HepG2 (cell line): ENCODE measurements at regions of chr13 and their contacts with region 1.

Region 1: DNA sequence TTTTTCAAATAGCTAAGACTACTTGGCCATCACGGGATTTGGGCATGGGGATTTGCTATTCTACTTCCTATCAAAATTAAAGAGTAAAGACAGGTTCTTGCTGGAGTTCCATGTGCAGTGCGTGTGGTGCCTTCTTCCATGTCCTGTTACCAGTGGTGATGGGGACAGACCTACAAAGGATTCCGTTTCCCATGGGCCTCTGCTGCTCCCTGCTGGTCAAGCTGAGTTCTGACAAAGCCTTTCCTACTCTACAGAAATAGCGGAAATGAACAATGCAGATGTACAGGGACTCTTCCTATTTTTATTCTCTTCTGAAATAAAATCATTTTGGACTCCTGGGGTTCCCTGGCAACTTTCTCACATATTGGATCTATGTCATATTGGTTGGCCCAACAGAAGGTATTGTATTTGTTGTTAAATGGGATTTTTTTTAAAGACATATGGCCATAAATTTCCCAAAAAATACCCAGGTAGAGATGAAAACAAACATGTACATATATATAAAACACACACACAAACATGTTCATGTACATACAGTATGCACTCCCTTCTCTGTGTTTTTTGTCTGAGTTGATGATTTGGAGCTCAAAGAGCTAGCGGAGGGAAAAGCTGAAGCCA is 90.5 kb upstream of the SLC15A1 start:
- DNase-seq: peak; percentile 69
- ATAC-seq: peak; percentile 91
- H3K4me3 ChIP-seq: no peak overlapping the region
- H3K27ac ChIP-seq: no peak overlapping the region
- H3K4me1 ChIP-seq: peaks cover 10% of the 10 kb centered on the region
- H3K27me3 ChIP-seq: no peaks in the 10 kb centered on the region; a peak in 1 of 5 replicates
- CTCF ChIP-seq: peak; percentile 90
- EP300 ChIP-seq: no peak
- POLR2A ChIP-seq: no peak
- RAD21 ChIP-seq: peak; percentile 66; the same call in 1 of the 2 replicates

Region 2: GRCh38 chr13:96946709-96947311 is 1896.2 kb before region 1 on chr13:
- CTCF ChIA-PET with region 1: no interaction called
- POLR2A ChIA-PET with region 1: no interaction called
- in situ Hi-C with region 1: no loop called
- intact Hi-C with region 1: no loop called
- DNase-seq: peak; percentile 53
- ATAC-seq: peak; percentile 92
- H3K4me3 ChIP-seq: no peak overlapping the region
- H3K27ac ChIP-seq: no peak overlapping the region
- H3K4me1 ChIP-seq: peaks cover 10% of the 10 kb centered on the region
- H3K27me3 ChIP-seq: no peaks in the 10 kb centered on the region
- CTCF ChIP-seq: no peak
- EP300 ChIP-seq: no peak
- POLR2A ChIP-seq: no peak
- RAD21 ChIP-seq: no peak

Region 3: GRCh38 chr13:97849305-97849704 is 993.7 kb before region 1 on chr13:
- CTCF ChIA-PET with region 1: interaction called, 3 read pairs
- POLR2A ChIA-PET with region 1: no interaction called
- in situ Hi-C with region 1: no loop called
- intact Hi-C with region 1: loop called (anchors 2 kb)
- DNase-seq: peak; percentile 36
- ATAC-seq: peak; percentile 97
- H3K4me3 ChIP-seq: no peak overlapping the region
- H3K27ac ChIP-seq: no peak overlapping the region
- H3K4me1 ChIP-seq: peaks cover 13% of the 10 kb centered on the region
- H3K27me3 ChIP-seq: peaks cover 0 to under 1% of the 10 kb centered on the region in 2 experiments; a peak in 2 of 5 replicates
- CTCF ChIP-seq: peak; percentile 71
- EP300 ChIP-seq: no peak
- POLR2A ChIP-seq: no peak
- RAD21 ChIP-seq: peak; percentile 34; the same call in 1 of the 2 replicates

Region 4: DNA sequence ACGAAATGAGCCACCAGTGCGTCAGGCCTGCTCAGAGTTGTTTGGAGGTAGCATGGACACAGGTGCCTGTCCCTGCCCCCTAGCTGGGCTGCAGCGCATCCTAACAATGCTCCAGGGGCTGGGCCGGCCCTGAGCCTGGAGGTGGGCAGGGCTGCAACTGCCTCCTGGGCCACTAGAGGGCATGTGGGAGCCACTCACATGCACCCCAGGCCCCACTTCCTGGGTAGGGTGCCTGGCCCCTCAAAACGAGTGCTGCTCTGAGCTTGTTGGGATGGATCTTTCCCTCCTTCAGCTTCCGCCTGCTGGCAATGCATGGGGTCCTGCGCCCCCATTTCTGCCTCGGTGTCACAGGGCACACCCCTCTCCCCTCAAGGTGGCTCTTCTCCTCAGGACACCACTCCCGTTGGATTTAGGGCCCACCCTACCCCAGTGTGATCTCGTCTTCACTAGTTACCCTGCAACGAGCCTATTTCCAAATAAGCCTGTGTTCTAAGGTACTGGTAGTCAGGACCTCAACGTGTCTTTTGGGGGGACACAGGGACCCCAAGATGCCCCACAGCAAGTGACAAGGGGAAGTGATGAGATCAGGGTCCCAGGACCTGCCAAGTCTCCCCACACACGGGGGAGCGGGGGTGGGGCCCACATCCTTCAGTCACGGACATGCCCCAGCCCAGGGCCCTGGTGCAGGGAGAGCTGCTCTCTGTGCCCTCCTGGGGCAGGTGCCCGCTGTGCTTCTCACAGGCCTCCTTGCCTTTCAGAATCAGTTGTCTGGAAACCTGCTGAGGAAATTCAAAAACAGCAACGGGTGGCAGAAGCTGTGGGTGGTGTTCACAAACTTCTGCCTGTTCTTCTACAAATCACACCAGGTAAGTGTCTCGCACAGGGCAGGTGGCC is 397.4 kb before region 1 on chr13:
- CTCF ChIA-PET with region 1: interaction called, 4 read pairs
- POLR2A ChIA-PET with region 1: no interaction called
- in situ Hi-C with region 1: no loop called
- intact Hi-C with region 1: loop called (anchors 1 kb)
- DNase-seq: peak; percentile 42
- ATAC-seq: peak; percentile 76
- H3K4me3 ChIP-seq: no peak overlapping the region
- H3K27ac ChIP-seq: no peak overlapping the region
- H3K4me1 ChIP-seq: peaks cover 12% of the 10 kb centered on the region
- H3K27me3 ChIP-seq: no peaks in the 10 kb centered on the region
- CTCF ChIP-seq: peak; percentile 97
- EP300 ChIP-seq: no peak
- POLR2A ChIP-seq: peak in 1 of 2 experiments; percentile 36; a peak in 1 of 4 replicates
- RAD21 ChIP-seq: peak; percentile 79

Region 5: GRCh38 chr13:98576963-98577822 is 265.8 kb before region 1 on chr13 and contains the start of gene STK24:
- CTCF ChIA-PET with region 1: no interaction called
- POLR2A ChIA-PET with region 1: no interaction called
- in situ Hi-C with region 1: no loop called
- intact Hi-C with region 1: loop called (anchors 10 kb)
- DNase-seq: peak; percentile 34
- ATAC-seq: peak; percentile 63
- H3K4me3 ChIP-seq: peak within 1 kb of the TSS; percentile 89 to 96 (median 95)
- H3K27ac ChIP-seq: peak within 1 kb of the TSS; percentile 96
- H3K4me1 ChIP-seq: peaks cover 46% of the 10 kb centered on the region
- H3K27me3 ChIP-seq: no peaks in the 10 kb centered on the region; a peak in 1 of 5 replicates
- CTCF ChIP-seq: no peak
- EP300 ChIP-seq: no peak
- POLR2A ChIP-seq: peak in 1 of 2 experiments; percentile 84; a peak in 3 of 4 replicates
- RAD21 ChIP-seq: peak; percentile 10; the same call in 1 of the 2 replicates
- total RNA-seq, gene STK24: 73.0 and 78.3 TPM in 2 replicates

Region 6: GRCh38 chr13:98798849-98799645 is 43.9 kb before region 1 on chr13:
- CTCF ChIA-PET with region 1: no interaction called
- POLR2A ChIA-PET with region 1: no interaction called
- in situ Hi-C with region 1: no loop called
- intact Hi-C with region 1: no loop called
- DNase-seq: peak; percentile 8
- ATAC-seq: no peak
- H3K4me3 ChIP-seq: no peak overlapping the region
- H3K27ac ChIP-seq: no peak overlapping the region
- H3K4me1 ChIP-seq: peaks cover 15% of the 10 kb centered on the region
- H3K27me3 ChIP-seq: no peaks in the 10 kb centered on the region
- CTCF ChIP-seq: no peak
- EP300 ChIP-seq: no peak
- POLR2A ChIP-seq: no peak
- RAD21 ChIP-seq: no peak

Region 7: DNA sequence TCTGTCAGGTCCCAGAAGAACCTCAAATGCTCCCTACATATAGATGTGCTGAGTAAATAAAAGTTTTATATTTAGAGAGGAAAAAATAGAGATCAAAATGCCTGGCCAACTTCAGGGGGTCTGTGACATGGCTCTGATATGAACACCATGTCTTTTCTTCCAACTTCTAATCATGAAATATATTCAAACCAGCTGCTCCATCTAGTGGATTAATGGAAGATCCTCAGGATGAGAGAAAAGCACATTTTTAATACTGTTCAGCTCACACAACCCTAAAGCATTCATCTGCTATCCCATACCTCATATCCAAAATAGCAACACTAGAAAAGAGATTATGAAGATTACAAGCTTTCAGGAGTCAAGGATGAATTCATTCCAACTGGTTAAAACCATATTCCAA is 190.8 kb after region 1 on chr13:
- CTCF ChIA-PET with region 1: interaction called, 5 read pairs
- POLR2A ChIA-PET with region 1: no interaction called
- in situ Hi-C with region 1: no loop called
- intact Hi-C with region 1: loop called (anchors 1 kb)
- DNase-seq: peak; percentile 21
- ATAC-seq: peak; percentile 53; the same call in 2 of the 3 replicates
- H3K4me3 ChIP-seq: no peak overlapping the region
- H3K27ac ChIP-seq: no peak overlapping the region
- H3K4me1 ChIP-seq: no peaks in the 10 kb centered on the region
- H3K27me3 ChIP-seq: no peaks in the 10 kb centered on the region
- CTCF ChIP-seq: 0 out of 2 replicates have a peak, but pooled peaks have one; percentile 35
- EP300 ChIP-seq: no peak
- POLR2A ChIP-seq: no peak
- RAD21 ChIP-seq: no peak